ENCODE measurements at regions of chr16 and their contacts with region 1.

Region 1: GRCh38 chr16:17467923-17468540 is 2.7 kb downstream of the XYLT1 start:
- DNase-seq: no peak
- CTCF ChIP-seq: peak; percentile 69

Region 2: DNA sequence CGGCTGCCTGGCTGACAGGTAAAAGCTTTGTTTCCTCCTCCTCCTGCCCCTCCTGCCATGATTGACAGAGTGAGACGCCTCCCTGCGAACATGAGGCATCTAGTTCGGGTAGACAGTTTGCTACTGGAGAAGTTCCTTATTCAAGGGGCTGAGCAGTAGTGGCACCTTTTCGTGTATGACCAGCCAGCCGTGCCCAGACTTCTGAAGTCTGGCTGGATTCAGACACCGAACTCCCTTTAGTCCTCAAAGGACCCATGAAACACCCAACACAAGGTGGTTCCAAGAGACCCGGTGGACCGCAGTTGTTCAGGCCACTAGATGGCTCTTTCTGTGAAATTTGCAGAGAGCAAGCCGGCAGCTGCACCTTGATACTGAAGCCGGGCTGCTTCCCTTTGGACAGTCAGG is 190.1 kb before region 1 on chr16:
- CTCF ChIA-PET with region 1: interaction called, 13 read pairs
- POLR2A ChIA-PET with region 1: no interaction called
- DNase-seq: peak; percentile 48
- CTCF ChIP-seq: peak; percentile 73

Region 3: GRCh38 chr16:17301593-17302135 is 166.4 kb before region 1 on chr16:
- CTCF ChIA-PET with region 1: interaction called, 14 read pairs
- POLR2A ChIA-PET with region 1: interaction called, 3 read pairs
- DNase-seq: peak; percentile 72
- CTCF ChIP-seq: no peak

Region 4: GRCh38 chr16:17448640-17449638 is 19.1 kb before region 1 on chr16:
- CTCF ChIA-PET with region 1: interaction called, 10 read pairs
- POLR2A ChIA-PET with region 1: interaction called, 4 read pairs
- DNase-seq: peak; percentile 50
- CTCF ChIP-seq: no peak